ENCODE measurements at regions of chr12 and their contacts with region 1.

Region 1: GRCh38 chr12:17866802-17867201 is 223.2 kb downstream of the RERGL start:
- DNase-seq: no peak

Region 2: GRCh38 chr12:17778242-17778641 is 88.6 kb before region 1 on chr12:
- intact Hi-C with region 1: loop called (anchors 5 to 10 kb)
- DNase-seq: no peak

Region 3: DNA sequence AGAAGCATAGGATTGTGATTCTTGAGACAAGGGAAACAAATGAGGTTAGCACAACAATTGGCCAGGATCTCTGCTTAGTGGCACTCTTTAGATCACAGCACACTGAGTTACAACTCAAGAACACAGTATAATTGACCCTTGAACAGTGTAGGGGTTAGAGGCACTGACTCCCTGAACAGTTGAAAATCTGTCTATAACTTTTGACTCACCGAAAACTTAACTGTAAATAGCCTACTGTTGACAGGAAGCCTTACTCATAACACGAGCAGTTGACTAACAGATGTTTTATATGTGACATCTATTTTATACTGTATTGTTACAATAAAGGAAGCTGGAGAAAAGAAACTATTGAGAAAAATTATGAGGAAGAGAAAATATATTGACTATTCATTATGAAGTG is 72.9 kb before region 1 on chr12:
- intact Hi-C with region 1: loop called in 1 of 2 experiments (anchors 10 kb)
- DNase-seq: no peak

Region 4: DNA sequence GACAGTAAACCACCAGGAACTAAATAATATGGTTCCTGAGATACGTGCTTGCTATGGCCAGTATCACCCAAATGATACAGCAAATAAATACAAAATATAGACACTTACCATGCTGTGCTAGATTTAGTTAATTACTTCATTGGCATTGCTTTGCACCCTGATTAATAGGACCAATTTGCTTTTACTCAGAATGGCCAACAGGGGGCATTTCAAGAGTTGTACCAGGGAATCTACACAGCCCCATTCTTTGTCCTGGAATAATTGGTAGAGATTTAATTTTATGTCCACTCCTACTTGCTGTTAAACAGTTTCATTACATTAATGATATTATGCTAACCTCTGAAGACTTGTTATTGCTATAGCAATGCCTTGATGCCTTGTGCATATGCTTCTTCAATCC is 57.6 kb before region 1 on chr12:
- intact Hi-C with region 1: no loop called
- DNase-seq: no peak

Region 5: DNA sequence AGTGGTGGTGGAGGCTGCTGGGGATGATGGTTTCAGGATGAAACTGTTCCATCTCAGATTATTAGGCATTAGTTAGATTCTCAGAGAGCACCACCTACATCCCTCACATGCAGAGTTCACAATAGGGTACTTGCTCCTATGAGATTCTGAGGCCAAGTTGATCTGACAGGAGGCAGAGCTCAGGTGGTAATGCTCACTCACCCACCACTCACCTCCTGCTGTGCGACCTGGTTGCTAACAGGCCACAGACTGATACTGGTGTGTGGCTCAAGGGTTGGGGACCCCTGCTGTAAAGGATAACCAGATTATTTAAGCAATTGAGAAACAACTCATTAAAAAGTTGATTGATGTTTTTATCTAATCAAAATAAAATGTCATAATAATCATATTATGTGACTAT is 25.3 kb before region 1 on chr12:
- intact Hi-C with region 1: no loop called
- DNase-seq: no peak